ENCODE measurements at regions of chr20 and their contacts with region 1.

Region 1: DNA sequence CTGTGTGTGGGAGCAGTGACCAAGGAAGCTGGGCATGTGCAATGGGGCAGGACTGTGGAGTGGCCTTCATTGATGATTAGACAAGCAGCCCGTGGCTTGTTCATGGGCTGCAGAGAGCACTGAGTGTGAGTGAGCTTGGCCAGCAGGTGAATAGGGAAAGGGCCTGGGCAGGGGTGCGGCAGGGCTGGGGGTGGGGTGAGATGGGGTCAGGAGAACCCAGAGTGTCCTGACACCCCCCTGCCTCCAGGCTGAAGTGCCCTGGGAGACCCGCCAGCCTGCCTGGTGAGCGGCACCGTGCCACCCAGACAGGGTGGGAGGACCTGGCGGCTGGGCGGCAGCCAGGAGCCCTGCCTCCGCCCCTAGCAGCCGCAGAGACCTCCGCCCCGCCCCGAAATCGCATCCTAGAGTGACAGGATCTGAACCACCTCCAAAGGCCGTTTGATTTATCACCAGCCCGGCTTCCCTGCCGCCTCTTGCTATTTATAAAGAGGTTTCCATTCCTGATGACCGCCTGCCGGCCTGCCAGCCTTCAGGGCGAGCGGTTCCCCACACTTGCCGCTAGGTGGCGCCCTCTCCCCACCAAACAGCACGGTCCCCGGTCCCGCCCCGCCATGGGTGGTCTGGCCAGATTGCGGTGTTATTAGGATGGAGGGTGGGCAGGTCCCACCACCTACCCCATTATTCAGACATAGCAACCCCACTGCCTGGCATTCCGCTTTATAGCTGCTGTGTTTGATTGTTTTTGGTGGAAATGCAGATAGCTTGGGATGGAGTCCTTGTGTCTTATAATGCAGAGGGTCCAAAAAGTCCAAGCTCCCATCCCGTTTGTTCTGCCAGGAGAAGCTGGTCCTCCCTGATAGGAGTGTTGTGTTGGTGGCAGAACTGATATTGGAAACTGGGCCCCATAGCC is 3.5 kb downstream of the MYLK2 start:
- DNase-seq: peak; percentile 53 to 88 (median 78)
- ATAC-seq: peak; percentile 88
- H3K4me3 ChIP-seq: no peak overlapping the region
- H3K4me3 Mint-ChIP-seq: no peak overlapping the region
- H3K27ac ChIP-seq: no peak overlapping the region
- H3K27ac Mint-ChIP-seq: no peak overlapping the region
- H3K4me1 ChIP-seq: peaks cover 6% of the 10 kb centered on the region
- H3K4me1 Mint-ChIP-seq: peaks cover 6% of the 10 kb centered on the region
- H3K27me3 ChIP-seq: peaks cover 0 to 4% of the 10 kb centered on the region in 2 experiments
- H3K27me3 Mint-ChIP-seq: no peaks in the 10 kb centered on the region
- CTCF ChIP-seq: peak; percentile 98

Region 2: DNA sequence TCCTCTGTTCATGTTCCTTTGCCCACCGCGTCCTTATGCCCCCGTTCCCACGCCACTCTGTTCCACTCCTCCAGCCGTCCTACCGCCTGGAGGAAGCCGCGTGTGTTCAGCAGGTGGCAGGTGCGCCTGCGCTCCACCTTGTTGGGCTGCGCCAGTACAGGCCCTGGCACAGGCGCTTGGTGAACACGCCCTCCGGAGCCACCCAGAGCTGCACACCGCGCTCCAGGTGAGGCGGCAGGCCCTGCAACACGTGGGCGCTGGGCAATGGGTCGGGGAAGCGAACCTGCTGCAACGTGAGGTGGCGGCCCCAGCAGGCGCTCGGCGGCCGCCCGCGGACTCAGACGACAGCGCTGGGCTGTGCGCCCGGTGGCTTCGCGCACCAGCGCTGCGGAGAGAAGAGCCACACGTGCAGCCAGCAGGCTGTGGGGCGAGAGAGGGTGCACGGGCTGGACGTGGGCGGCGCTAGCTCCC is 26.8 kb after region 1 on chr20:
- CTCF ChIA-PET with region 1: interaction called, 15 read pairs
- POLR2A ChIA-PET with region 1: no interaction called
- intact Hi-C with region 1: loop called in 1 of 2 experiments (anchors 1 kb)
- DNase-seq: no peak
- ATAC-seq: no peak
- H3K4me3 ChIP-seq: no peak overlapping the region
- H3K4me3 Mint-ChIP-seq: no peak overlapping the region
- H3K27ac ChIP-seq: no peak overlapping the region
- H3K27ac Mint-ChIP-seq: no peak overlapping the region
- H3K4me1 ChIP-seq: no peaks in the 10 kb centered on the region
- H3K4me1 Mint-ChIP-seq: no peaks in the 10 kb centered on the region
- H3K27me3 ChIP-seq: peaks cover 0 to 4% of the 10 kb centered on the region in 2 experiments
- H3K27me3 Mint-ChIP-seq: peaks cover 18% of the 10 kb centered on the region
- CTCF ChIP-seq: no peak

Region 3: GRCh38 chr20:32031007-32031958 is 208.6 kb after region 1 on chr20:
- CTCF ChIA-PET with region 1: interaction called, 79 read pairs
- POLR2A ChIA-PET with region 1: no interaction called
- intact Hi-C with region 1: loop called (anchors 1 kb)
- DNase-seq: peak; percentile 22 to 73 (median 59)
- ATAC-seq: peak; percentile 75
- H3K4me3 ChIP-seq: peak overlapping the region; percentile 28 to 32
- H3K4me3 Mint-ChIP-seq: peak overlapping the region; percentile 39
- H3K27ac ChIP-seq: no peak overlapping the region
- H3K27ac Mint-ChIP-seq: no peak overlapping the region
- H3K4me1 ChIP-seq: peaks cover 4% of the 10 kb centered on the region
- H3K4me1 Mint-ChIP-seq: peaks cover 2% of the 10 kb centered on the region
- H3K27me3 ChIP-seq: peaks cover 4 to 7% of the 10 kb centered on the region in 2 experiments
- H3K27me3 Mint-ChIP-seq: peaks cover 31% of the 10 kb centered on the region
- CTCF ChIP-seq: peak; percentile 100

Region 4: DNA sequence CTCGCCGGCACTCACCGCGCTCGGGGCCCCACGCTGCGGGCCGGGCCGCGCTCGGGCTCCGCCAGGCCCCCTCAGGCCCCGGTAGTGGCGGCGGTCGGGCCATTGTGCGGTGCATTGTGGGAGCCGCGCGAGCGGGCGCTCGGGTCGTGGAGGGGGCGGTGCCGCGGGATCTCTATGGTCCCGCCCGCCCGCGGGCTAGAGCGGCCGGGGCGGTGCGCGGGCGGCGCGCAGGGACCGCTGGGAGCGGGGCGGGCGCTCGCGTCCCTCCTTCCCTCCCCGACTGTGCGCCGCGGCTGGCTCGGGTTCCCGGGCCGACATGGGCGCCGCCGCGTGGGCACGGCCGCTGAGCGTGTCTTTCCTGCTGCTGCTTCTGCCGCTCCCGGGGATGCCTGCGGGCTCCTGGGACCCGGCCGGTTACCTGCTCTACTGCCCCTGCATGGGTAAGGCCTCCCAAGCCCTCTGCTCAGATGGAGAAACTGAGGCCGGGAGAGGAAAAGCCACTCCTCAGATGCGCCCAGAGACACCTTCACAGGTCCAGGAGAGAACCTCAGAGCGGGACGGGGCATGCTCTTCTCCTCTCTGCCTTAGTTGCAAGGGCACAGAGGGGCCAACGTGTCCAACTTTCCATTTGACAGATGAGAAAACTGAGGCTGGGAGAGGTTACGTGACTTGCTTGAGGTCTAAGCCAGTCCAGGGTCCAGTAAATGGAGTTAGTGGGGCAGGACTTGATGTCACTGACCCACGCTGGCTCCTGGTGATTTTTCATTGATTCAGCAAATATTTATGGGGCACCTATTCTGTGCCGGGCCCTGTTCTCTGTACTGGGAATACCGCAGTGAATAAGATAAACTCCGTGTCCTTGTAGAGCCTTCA is 385.2 kb after region 1 on chr20 and contains the starts of genes PLAGL2 and POFUT1:
- CTCF ChIA-PET with region 1: no interaction called
- POLR2A ChIA-PET with region 1: no interaction called
- intact Hi-C with region 1: loop called in 1 of 2 experiments (anchors 5 kb)
- DNase-seq: peak; percentile 73 to 94 (median 86)
- ATAC-seq: peak; percentile 96
- H3K4me3 ChIP-seq: peak within 1 kb of the TSS; percentile 84 to 86
- H3K4me3 Mint-ChIP-seq: peak within 1 kb of the TSS; percentile 94
- H3K27ac ChIP-seq: peak within 1 kb of the TSS; percentile 68 to 70
- H3K27ac Mint-ChIP-seq: peak within 1 kb of the TSS; percentile 92
- H3K4me1 ChIP-seq: peaks cover 53% of the 10 kb centered on the region
- H3K4me1 Mint-ChIP-seq: peaks cover 82% of the 10 kb centered on the region
- H3K27me3 ChIP-seq: no peaks in the 10 kb centered on the region
- H3K27me3 Mint-ChIP-seq: no peaks in the 10 kb centered on the region
- CTCF ChIP-seq: no peak
- total RNA-seq, gene PLAGL2: 15.8 to 16.9 TPM
- total RNA-seq, gene POFUT1: 5.1 to 6.3 TPM

Region 5: GRCh38 chr20:32387252-32387651 is 564.6 kb after region 1 on chr20:
- CTCF ChIA-PET with region 1: no interaction called
- POLR2A ChIA-PET with region 1: no interaction called
- intact Hi-C with region 1: no loop called
- DNase-seq: peak in 7 of 9 experiments; percentile 3 to 85 (median 36)
- ATAC-seq: peak; percentile 95
- H3K4me3 ChIP-seq: no peak overlapping the region
- H3K4me3 Mint-ChIP-seq: peak overlapping the region; percentile 3
- H3K27ac ChIP-seq: peak overlapping the region in 1 of 2 experiments; percentile 2
- H3K27ac Mint-ChIP-seq: peak overlapping the region; percentile 91
- H3K4me1 ChIP-seq: peaks cover 34% of the 10 kb centered on the region
- H3K4me1 Mint-ChIP-seq: peaks cover 65% of the 10 kb centered on the region
- H3K27me3 ChIP-seq: no peaks in the 10 kb centered on the region
- H3K27me3 Mint-ChIP-seq: no peaks in the 10 kb centered on the region
- CTCF ChIP-seq: no peak

Region 6: GRCh38 chr20:32779500-32780211 is 957.0 kb after region 1 on chr20:
- CTCF ChIA-PET with region 1: no interaction called
- POLR2A ChIA-PET with region 1: no interaction called
- intact Hi-C with region 1: loop called in 1 of 2 experiments (anchors 10 kb)
- DNase-seq: no peak
- ATAC-seq: no peak
- H3K4me3 ChIP-seq: no peak overlapping the region
- H3K4me3 Mint-ChIP-seq: no peak overlapping the region
- H3K27ac ChIP-seq: no peak overlapping the region
- H3K27ac Mint-ChIP-seq: no peak overlapping the region
- H3K4me1 ChIP-seq: no peaks in the 10 kb centered on the region
- H3K4me1 Mint-ChIP-seq: peaks cover 16% of the 10 kb centered on the region
- H3K27me3 ChIP-seq: no peaks in the 10 kb centered on the region
- H3K27me3 Mint-ChIP-seq: no peaks in the 10 kb centered on the region
- CTCF ChIP-seq: no peak

Measured in CD8-positive, alpha-beta T cell (primary cell).